Vagina (tissue), 2 donors: ENCODE measurements at regions of chr7 and their contacts with region 1.

Region 1: DNA sequence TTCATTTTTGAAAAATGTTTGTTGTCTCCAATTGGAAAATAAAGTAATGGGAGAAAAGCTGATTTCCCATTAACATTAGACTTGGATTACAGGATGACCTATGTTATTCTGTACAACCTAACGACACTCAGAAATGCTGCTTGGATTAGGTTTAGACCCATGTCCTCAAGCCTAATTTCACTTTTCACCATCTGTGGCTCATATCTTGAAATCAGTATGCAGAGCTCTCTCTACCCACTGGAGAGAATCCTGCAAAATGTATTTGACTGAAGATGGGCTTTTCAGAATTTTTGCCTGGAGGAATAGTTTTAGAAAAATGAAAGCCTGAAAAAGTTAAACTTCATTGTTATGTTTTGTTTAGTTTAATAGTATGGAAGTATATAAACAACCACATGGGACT is 63.8 kb downstream of the SLC13A1 start:
- DNase-seq: no peak
- H3K4me3 ChIP-seq: no peak overlapping the region
- H3K27ac ChIP-seq: no peak overlapping the region
- H3K4me1 ChIP-seq: no peaks in the 10 kb centered on the region
- H3K27me3 ChIP-seq: no peaks in the 10 kb centered on the region
- CTCF ChIP-seq: no peak
- POLR2A ChIP-seq: no peak

Region 2: GRCh38 chr7:123170333-123171246 is 34.6 kb after region 1 on chr7:
- intact Hi-C with region 1: loop called (anchors 2 kb)
- DNase-seq: no peak
- H3K4me3 ChIP-seq: no peak overlapping the region
- H3K27ac ChIP-seq: no peak overlapping the region
- H3K4me1 ChIP-seq: no peaks in the 10 kb centered on the region
- H3K27me3 ChIP-seq: no peaks in the 10 kb centered on the region
- CTCF ChIP-seq: no peak
- POLR2A ChIP-seq: no peak

Region 3: DNA sequence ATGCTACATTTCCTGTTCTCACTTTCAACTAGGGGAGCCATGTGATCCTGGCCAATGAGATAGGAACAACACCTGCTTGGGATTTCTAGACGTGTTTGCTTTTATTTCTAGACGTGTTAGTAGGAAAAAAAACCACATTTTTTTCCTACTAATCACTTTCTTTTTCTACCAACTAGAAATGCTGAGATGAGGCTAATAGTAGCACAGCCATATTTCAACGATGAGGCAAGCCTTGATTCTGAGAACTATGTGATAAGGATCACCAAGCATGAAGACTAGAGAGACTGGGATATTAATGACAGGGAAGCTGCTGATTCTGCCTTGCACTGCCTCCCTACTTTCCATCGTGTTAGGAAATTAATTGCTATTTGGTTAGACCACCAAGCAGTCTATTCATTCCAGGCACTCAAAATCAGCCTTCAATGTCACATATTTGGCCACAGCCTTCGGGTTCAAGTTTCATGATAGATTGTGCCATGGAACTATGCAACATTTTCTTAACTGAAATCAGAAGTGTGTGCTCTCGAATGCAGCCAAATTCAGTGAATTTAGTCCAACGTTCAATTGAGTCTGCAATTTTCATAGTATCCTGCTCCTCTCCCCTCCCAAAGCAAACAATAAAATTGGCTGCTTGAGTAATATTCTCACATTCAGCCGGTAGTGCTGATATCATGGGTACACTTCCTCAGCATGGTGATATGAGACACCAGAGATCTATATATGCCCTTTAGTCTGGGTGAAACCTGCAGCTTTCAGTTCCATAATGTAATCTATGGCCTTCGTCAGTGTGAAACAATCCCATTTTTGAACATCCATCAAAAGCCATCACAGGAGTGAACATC is 1531.6 kb after region 1 on chr7:
- intact Hi-C with region 1: no loop called
- DNase-seq: no peak
- H3K4me3 ChIP-seq: no peak overlapping the region
- H3K27ac ChIP-seq: no peak overlapping the region
- H3K4me1 ChIP-seq: no peaks in the 10 kb centered on the region
- H3K27me3 ChIP-seq: no peaks in the 10 kb centered on the region
- CTCF ChIP-seq: no peak
- POLR2A ChIP-seq: no peak